ENCODE measurements at regions of chr5 and their contacts with region 1.

Region 1: DNA sequence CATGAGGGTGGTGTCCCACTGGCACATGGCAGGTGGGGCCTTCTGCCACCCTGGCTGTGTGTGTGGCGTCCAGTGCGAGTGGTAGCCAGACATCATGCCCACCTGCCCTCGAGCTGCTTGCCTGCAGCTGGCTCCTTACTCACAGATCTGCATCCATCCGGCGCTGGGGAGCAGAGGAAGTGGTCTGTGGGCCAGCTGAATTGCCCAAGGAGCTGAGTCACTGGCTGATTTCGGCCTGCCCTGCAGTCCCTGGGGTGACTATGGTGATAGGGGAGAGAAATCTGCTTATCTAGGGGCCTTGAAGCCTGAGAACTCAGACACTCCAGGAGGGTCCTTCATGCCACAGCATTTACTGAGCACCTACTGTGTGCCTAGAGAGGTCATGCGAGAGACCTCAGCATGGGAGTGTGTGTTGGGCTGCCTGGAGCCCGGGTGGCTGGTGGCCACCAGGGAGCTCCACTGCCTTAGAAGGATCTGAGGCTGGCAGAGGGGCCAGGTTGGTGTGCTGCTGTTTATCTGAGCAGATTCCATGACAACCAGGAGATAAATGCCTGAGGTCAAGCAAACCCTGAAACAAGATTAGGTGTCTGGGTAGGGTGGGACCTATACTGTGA is 57.1 kb downstream of the SLC22A5 start:
- DNase-seq: peak; percentile 46 to 65
- ATAC-seq: peak; percentile 66 to 80
- H3K4me3 ChIP-seq: no peak overlapping the region
- H3K27ac ChIP-seq: peak overlapping the region; percentile 67 to 84
- H3K4me1 ChIP-seq: peaks cover 60% of the 10 kb centered on the region
- CTCF ChIP-seq: peak; percentile 20; the same call in 2 of the 3 replicates
- EP300 ChIP-seq: no peak
- POLR2A ChIP-seq: no peak
- RAD21 ChIP-seq: peak in 1 of 2 experiments; percentile 17; a peak in 1 of 5 replicates

Region 2: GRCh38 chr5:132446669-132447068 is 20.0 kb after region 1 on chr5:
- CTCF ChIA-PET with region 1: interaction called, 15 read pairs
- POLR2A ChIA-PET with region 1: interaction called, 5 read pairs
- DNase-seq: no peak
- ATAC-seq: no peak
- H3K4me3 ChIP-seq: no peak overlapping the region
- H3K27ac ChIP-seq: no peak overlapping the region
- H3K4me1 ChIP-seq: no peaks in the 10 kb centered on the region
- CTCF ChIP-seq: no peak
- EP300 ChIP-seq: no peak
- POLR2A ChIP-seq: no peak
- RAD21 ChIP-seq: no peak

Region 3: GRCh38 chr5:132472431-132472830 is 45.8 kb after region 1 on chr5:
- CTCF ChIA-PET with region 1: no interaction called
- POLR2A ChIA-PET with region 1: no interaction called
- DNase-seq: no peak
- ATAC-seq: no peak
- H3K4me3 ChIP-seq: no peak overlapping the region
- H3K27ac ChIP-seq: no peak overlapping the region
- H3K4me1 ChIP-seq: peaks cover 10% of the 10 kb centered on the region
- CTCF ChIP-seq: no peak
- EP300 ChIP-seq: no peak
- POLR2A ChIP-seq: no peak
- RAD21 ChIP-seq: no peak